ENCODE measurements at regions of chr1 and their contacts with region 1.

Region 1: GRCh38 chr1:175146529-175147213 is 45.9 kb downstream of the KIAA0040 start:
- DNase-seq: peak; percentile 63
- ATAC-seq: peak; percentile 92
- H3K4me3 Mint-ChIP-seq: no peak overlapping the region
- H3K27ac Mint-ChIP-seq: no peak overlapping the region
- H3K4me1 Mint-ChIP-seq: peaks cover 15% of the 10 kb centered on the region
- H3K27me3 Mint-ChIP-seq: peaks cover 24% of the 10 kb centered on the region
- CTCF ChIP-seq: no peak

Region 2: DNA sequence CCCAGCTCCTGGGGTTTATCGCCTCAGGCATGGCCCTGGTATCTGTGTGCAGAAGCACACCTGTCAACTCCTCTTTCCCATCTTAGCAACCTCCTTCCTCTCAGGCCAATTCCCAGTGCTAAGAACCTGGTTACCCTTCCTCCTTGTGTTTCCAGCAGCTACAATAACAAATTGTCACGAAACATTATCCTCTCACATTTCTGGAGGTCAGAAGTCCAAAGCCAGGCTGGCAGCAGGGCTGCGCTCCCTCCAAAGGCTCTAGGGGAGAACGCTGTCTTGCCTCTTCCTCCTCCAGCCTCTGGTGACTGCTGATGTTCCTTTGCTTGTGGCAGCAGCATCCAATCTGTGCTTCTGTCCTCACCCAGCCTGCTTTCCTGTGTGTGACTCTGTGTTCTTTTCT is 112.7 kb before region 1 on chr1:
- CTCF ChIA-PET with region 1: interaction called, 11 read pairs
- POLR2A ChIA-PET with region 1: no interaction called
- intact Hi-C with region 1: loop called (anchors 1 kb)
- DNase-seq: no peak
- ATAC-seq: no peak
- H3K4me3 Mint-ChIP-seq: no peak overlapping the region
- H3K27ac Mint-ChIP-seq: no peak overlapping the region
- H3K4me1 Mint-ChIP-seq: peaks cover 9% of the 10 kb centered on the region
- H3K27me3 Mint-ChIP-seq: peaks cover 4% of the 10 kb centered on the region
- CTCF ChIP-seq: no peak

Region 3: GRCh38 chr1:175124861-175125260 is 21.8 kb before region 1 on chr1:
- CTCF ChIA-PET with region 1: interaction called, 24 read pairs
- POLR2A ChIA-PET with region 1: no interaction called
- intact Hi-C with region 1: no loop called
- DNase-seq: no peak
- ATAC-seq: no peak
- H3K4me3 Mint-ChIP-seq: no peak overlapping the region
- H3K27ac Mint-ChIP-seq: no peak overlapping the region
- H3K4me1 Mint-ChIP-seq: no peaks in the 10 kb centered on the region
- H3K27me3 Mint-ChIP-seq: peaks cover 3% of the 10 kb centered on the region
- CTCF ChIP-seq: no peak

Region 4: DNA sequence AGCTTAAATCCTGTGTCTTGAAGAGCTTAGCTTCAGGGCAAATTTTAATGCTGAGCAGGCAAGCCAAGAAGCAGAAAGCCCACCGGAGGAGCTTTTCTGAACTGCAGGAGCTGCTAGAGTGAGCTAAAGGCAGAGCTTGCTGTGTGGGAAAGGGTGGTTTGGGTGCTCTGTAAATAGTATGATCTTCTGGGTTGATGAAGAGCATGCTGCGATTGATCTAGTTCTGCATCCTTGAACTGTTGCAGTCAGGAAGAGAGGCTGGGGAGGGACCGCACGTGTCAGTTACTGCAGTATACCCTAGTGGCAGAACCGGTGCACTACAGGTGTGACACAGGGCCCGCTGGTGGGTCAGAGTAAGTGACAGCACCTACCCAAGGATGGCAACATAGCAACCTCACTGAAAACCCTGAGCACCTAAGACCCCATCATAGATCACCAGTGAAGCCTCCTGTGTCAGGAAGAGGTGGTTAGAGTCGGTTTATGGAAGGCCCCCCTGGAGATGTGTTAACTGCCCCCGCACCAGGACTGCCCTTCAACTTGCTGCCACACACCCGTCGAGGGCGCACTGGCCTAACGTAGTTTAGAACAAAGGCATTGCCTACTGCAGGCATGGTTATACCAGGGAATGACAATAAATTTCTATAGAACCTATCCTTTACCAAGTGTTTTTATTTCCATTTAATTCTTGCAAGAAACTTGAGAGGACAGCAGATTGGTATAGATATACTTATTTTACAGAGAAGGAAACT is 191.9 kb after region 1 on chr1:
- CTCF ChIA-PET with region 1: interaction called, 16 read pairs
- POLR2A ChIA-PET with region 1: no interaction called
- intact Hi-C with region 1: no loop called
- DNase-seq: peak; percentile 37
- ATAC-seq: peak; percentile 89
- H3K4me3 Mint-ChIP-seq: no peak overlapping the region
- H3K27ac Mint-ChIP-seq: no peak overlapping the region
- H3K4me1 Mint-ChIP-seq: no peaks in the 10 kb centered on the region
- H3K27me3 Mint-ChIP-seq: peaks cover 8% of the 10 kb centered on the region
- CTCF ChIP-seq: no peak

Measured in activated B cell treated with CpG ODN at 0.5 μM for 24 hours (primary cell).